Activated T-helper 2 cell treated with anti-CD3 and anti-CD28 coated beads, Interferon-gamma antibody, Interleukin-2, Interleukin-4, amounts not matched to agents 10 μg/mL and 5 μg/mL and 100 μg/mL, durations not matched to agents 14 hours and 24 hours and 36 hours (primary cell): ENCODE measurements at regions of chr19 and their contacts with region 1.

Region 1: GRCh38 chr19:17539238-17540117 is 16.0 kb upstream of the COLGALT1 start:
- DNase-seq: peak; percentile 96
- H3K4me3 Mint-ChIP-seq: peak overlapping the region; percentile 79
- H3K27ac Mint-ChIP-seq: peak overlapping the region; percentile 2
- H3K4me1 Mint-ChIP-seq: peaks cover 7% of the 10 kb centered on the region
- H3K27me3 Mint-ChIP-seq: peaks cover 10% of the 10 kb centered on the region

Region 2: GRCh38 chr19:17511724-17512573 is 27.5 kb before region 1 on chr19:
- intact Hi-C with region 1: loop called (anchors 1 kb)
- DNase-seq: peak; percentile 80
- H3K4me3 Mint-ChIP-seq: peak overlapping the region; percentile 100
- H3K27ac Mint-ChIP-seq: peak overlapping the region; percentile 74
- H3K4me1 Mint-ChIP-seq: peaks cover 23% of the 10 kb centered on the region
- H3K27me3 Mint-ChIP-seq: no peaks in the 10 kb centered on the region